ENCODE measurements at regions of chr7 and their contacts with region 1.

Region 1: GRCh38 chr7:98841179-98841997 is 28.4 kb downstream of the TMEM130 start:
- DNase-seq: peak; percentile 88
- H3K4me3 ChIP-seq: peak overlapping the region in 1 of 2 experiments; percentile 6; a peak in 1 of 4 replicates
- H3K27ac ChIP-seq: no peak overlapping the region
- H3K4me1 ChIP-seq: no peaks in the 10 kb centered on the region; a peak in 1 of 4 replicates
- H3K27me3 ChIP-seq: no peaks in the 10 kb centered on the region
- CTCF ChIP-seq: peak; percentile 100
- EP300 ChIP-seq: no peak
- RAD21 ChIP-seq: peak; percentile 99

Region 2: GRCh38 chr7:98400542-98401340 is 440.6 kb before region 1 on chr7 and contains the start of gene BAIAP2L1:
- CTCF ChIA-PET with region 1: interaction called, 11 read pairs
- POLR2A ChIA-PET with region 1: no interaction called
- DNase-seq: peak; percentile 100
- H3K4me3 ChIP-seq: peak within 1 kb of the TSS; percentile 58 to 63
- H3K27ac ChIP-seq: no peak within 1 kb of the TSS
- H3K4me1 ChIP-seq: peaks cover 4 to 8% of the 10 kb centered on the region in 2 experiments; a peak in 2 of 4 replicates
- H3K27me3 ChIP-seq: no peaks in the 10 kb centered on the region
- CTCF ChIP-seq: no peak
- EP300 ChIP-seq: no peak
- RAD21 ChIP-seq: peak; percentile 74
- polyA plus RNA-seq, gene BAIAP2L1: 8.7 and 8.8 TPM in 2 replicates

Region 3: GRCh38 chr7:98617051-98617959 is 224.1 kb before region 1 on chr7 and contains the start of gene NPTX2:
- CTCF ChIA-PET with region 1: interaction called, 14 read pairs
- POLR2A ChIA-PET with region 1: interaction called, 3 read pairs
- DNase-seq: peak; percentile 99
- H3K4me3 ChIP-seq: peak within 1 kb of the TSS in 1 of 2 experiments; percentile 52; a peak in 2 of 4 replicates
- H3K27ac ChIP-seq: peak within 1 kb of the TSS in 1 of 2 experiments; percentile 28; a peak in 1 of 4 replicates
- H3K4me1 ChIP-seq: peaks cover 0 to 48% of the 10 kb centered on the region in 2 experiments; a peak in 2 of 4 replicates
- H3K27me3 ChIP-seq: no peaks in the 10 kb centered on the region
- CTCF ChIP-seq: no peak
- EP300 ChIP-seq: no peak
- RAD21 ChIP-seq: peak; percentile 48
- polyA plus RNA-seq, gene NPTX2: 0.41 and 1.2 TPM in 2 replicates

Region 4: GRCh38 chr7:98753989-98754479 is 87.4 kb before region 1 on chr7:
- CTCF ChIA-PET with region 1: interaction called, 249 read pairs
- POLR2A ChIA-PET with region 1: no interaction called
- DNase-seq: peak; percentile 65
- H3K4me3 ChIP-seq: no peak overlapping the region
- H3K27ac ChIP-seq: no peak overlapping the region
- H3K4me1 ChIP-seq: peaks cover 0 to 7% of the 10 kb centered on the region in 2 experiments; a peak in 1 of 4 replicates
- H3K27me3 ChIP-seq: no peaks in the 10 kb centered on the region
- CTCF ChIP-seq: no peak
- EP300 ChIP-seq: no peak
- RAD21 ChIP-seq: no peak

Region 5: GRCh38 chr7:98802088-98802780 is 39.2 kb before region 1 on chr7:
- CTCF ChIA-PET with region 1: interaction called, 20 read pairs
- POLR2A ChIA-PET with region 1: no interaction called
- DNase-seq: peak; percentile 91
- H3K4me3 ChIP-seq: no peak overlapping the region
- H3K27ac ChIP-seq: peak overlapping the region in 1 of 2 experiments; percentile 45; a peak in 2 of 4 replicates
- H3K4me1 ChIP-seq: peaks cover 0 to 12% of the 10 kb centered on the region in 2 experiments; a peak in 1 of 4 replicates
- H3K27me3 ChIP-seq: no peaks in the 10 kb centered on the region
- CTCF ChIP-seq: no peak
- EP300 ChIP-seq: peak in 1 of 2 experiments; percentile 68; a peak in 1 of 4 replicates
- RAD21 ChIP-seq: peak; percentile 3; the same call in 1 of the 2 replicates

Region 6: DNA sequence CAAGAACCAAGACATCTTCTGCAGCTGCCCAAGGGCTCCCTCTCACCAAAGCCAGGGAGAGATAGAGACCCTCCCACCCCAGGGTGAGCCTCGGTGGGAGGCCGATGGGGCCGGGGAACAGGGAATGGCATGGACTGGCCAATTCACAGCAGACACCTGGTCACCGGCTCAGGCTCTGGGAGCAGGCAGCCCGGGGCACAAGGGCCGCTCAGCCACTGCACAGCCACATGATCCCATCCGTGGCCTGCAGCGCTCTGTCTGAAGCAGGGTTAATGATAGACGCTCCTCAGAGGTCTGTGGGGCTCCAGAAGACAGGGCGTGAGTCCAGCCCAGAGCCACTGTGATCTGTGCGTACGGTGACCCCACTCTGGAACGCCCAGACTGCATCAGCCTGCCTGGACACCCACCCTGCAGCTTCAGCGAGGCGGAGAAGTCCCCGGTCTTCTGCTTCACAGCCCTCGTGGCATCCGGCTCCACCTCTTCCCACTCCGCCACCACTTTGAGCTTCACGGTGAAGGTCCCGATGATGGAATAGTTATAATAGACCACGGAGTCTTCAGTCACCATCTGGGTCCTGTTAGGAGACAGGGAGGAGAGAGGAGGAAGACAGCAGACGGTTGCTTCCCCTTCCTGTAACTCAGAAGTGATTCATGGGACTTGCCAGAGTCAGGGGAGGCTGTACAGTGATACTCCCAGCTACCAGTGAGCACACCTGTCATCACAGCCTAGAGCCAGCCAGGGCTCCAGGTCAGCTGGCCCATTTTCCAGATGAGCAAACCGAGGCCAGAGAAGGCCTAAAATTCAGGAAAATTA is 14.4 kb after region 1 on chr7:
- CTCF ChIA-PET with region 1: interaction called, 82 read pairs
- POLR2A ChIA-PET with region 1: interaction called, 3 read pairs
- DNase-seq: peak; percentile 12
- H3K4me3 ChIP-seq: no peak overlapping the region
- H3K27ac ChIP-seq: no peak overlapping the region
- H3K4me1 ChIP-seq: no peaks in the 10 kb centered on the region
- H3K27me3 ChIP-seq: no peaks in the 10 kb centered on the region
- CTCF ChIP-seq: no peak
- EP300 ChIP-seq: no peak
- RAD21 ChIP-seq: no peak